ENCODE measurements at regions of chr7 and their contacts with region 1.

Region 1: DNA sequence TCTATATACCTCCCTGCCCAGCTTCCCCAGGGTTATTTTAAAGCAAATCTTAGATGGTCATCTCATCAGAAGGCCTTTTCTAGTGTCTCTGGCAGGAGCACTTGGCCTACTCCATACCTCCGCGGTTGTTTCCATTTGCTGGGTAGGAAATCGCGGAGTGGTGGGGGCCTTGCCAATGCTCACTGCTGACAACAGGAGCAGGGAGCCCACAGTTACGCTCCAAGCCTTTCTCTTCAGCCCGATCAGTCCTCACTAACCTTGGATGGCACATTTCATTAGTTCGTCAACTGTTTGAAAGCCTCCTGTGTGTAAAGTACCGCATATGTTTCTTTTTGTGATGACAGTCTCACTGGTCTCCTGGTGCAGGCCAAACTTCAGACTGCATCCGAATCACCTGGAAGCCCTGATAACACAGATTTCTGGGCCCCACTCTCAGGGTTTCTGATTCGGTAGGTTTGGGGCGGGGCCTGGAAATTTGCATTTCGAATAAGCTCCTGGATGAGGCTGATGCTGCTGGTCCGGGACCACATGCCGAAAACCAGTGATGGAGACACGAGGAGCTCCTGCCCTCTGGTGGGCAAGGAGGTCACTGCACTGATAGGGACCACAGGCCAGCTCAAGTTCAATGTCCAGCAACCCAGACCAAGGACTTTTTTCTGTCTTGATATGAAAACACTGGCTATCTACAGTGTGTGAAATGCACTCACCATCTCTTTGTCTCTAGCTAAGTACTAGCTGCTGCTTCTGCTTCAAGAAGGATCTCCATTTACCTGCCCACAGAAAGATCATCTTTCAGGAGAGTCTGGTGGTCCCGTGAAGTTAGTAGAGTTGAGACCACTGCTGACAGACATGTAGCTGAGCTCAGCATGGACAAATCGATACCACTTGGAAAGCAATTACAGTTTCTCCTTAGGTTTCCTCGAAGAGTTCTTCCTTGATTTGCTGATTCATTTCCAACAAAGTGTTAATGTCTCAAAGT is 14.0 kb downstream of the LRGUK start:
- DNase-seq: peak; percentile 86
- H3K4me3 ChIP-seq: no peak overlapping the region
- H3K27ac ChIP-seq: peak overlapping the region in 1 of 2 experiments; percentile 63; a peak in 2 of 4 replicates
- H3K4me1 ChIP-seq: peaks cover 0 to 20% of the 10 kb centered on the region in 2 experiments; a peak in 2 of 4 replicates
- H3K27me3 ChIP-seq: no peaks in the 10 kb centered on the region
- CTCF ChIP-seq: peak; percentile 98
- EP300 ChIP-seq: peak in 1 of 2 experiments; percentile 49; a peak in 1 of 4 replicates
- RAD21 ChIP-seq: peak; percentile 98

Region 2: GRCh38 chr7:133668296-133669060 is 472.7 kb before region 1 on chr7:
- CTCF ChIA-PET with region 1: no interaction called
- POLR2A ChIA-PET with region 1: no interaction called
- DNase-seq: no peak
- H3K4me3 ChIP-seq: no peak overlapping the region
- H3K27ac ChIP-seq: peak overlapping the region; percentile 39 to 94; a peak in 3 of 4 replicates
- H3K4me1 ChIP-seq: peaks cover 7 to 56% of the 10 kb centered on the region in 2 experiments; a peak in 3 of 4 replicates
- H3K27me3 ChIP-seq: no peaks in the 10 kb centered on the region
- CTCF ChIP-seq: no peak
- EP300 ChIP-seq: no peak
- RAD21 ChIP-seq: no peak

Region 3: GRCh38 chr7:134024739-134025138 is 116.4 kb before region 1 on chr7:
- CTCF ChIA-PET with region 1: interaction called, 19 read pairs
- POLR2A ChIA-PET with region 1: interaction called, 3 read pairs
- DNase-seq: peak; percentile 30
- H3K4me3 ChIP-seq: no peak overlapping the region
- H3K27ac ChIP-seq: peak overlapping the region in 1 of 2 experiments; percentile 98; a peak in 2 of 4 replicates
- H3K4me1 ChIP-seq: peaks cover 0 to 42% of the 10 kb centered on the region in 2 experiments; a peak in 2 of 4 replicates
- H3K27me3 ChIP-seq: no peaks in the 10 kb centered on the region
- CTCF ChIP-seq: no peak
- EP300 ChIP-seq: 0 out of 4 replicates have a peak, but pooled peaks of 1 of the 2 experiments have one; percentile 30
- RAD21 ChIP-seq: no peak; the same call in 1 of the 2 replicates

Region 4: GRCh38 chr7:134126966-134127848 is 14.0 kb before region 1 on chr7 and contains the start of gene LRGUK:
- CTCF ChIA-PET with region 1: interaction called, 25 read pairs
- POLR2A ChIA-PET with region 1: interaction called, 3 read pairs
- DNase-seq: peak; percentile 94
- H3K4me3 ChIP-seq: peak within 1 kb of the TSS; percentile 82 to 86
- H3K27ac ChIP-seq: peak within 1 kb of the TSS in 1 of 2 experiments; percentile 71; a peak in 2 of 4 replicates
- H3K4me1 ChIP-seq: peaks cover 0 to 16% of the 10 kb centered on the region in 2 experiments; a peak in 2 of 4 replicates
- H3K27me3 ChIP-seq: no peaks in the 10 kb centered on the region
- CTCF ChIP-seq: no peak
- EP300 ChIP-seq: no peak
- RAD21 ChIP-seq: no peak
- polyA plus RNA-seq, gene LRGUK: 1.5 TPM in 2 replicates

Region 5: DNA sequence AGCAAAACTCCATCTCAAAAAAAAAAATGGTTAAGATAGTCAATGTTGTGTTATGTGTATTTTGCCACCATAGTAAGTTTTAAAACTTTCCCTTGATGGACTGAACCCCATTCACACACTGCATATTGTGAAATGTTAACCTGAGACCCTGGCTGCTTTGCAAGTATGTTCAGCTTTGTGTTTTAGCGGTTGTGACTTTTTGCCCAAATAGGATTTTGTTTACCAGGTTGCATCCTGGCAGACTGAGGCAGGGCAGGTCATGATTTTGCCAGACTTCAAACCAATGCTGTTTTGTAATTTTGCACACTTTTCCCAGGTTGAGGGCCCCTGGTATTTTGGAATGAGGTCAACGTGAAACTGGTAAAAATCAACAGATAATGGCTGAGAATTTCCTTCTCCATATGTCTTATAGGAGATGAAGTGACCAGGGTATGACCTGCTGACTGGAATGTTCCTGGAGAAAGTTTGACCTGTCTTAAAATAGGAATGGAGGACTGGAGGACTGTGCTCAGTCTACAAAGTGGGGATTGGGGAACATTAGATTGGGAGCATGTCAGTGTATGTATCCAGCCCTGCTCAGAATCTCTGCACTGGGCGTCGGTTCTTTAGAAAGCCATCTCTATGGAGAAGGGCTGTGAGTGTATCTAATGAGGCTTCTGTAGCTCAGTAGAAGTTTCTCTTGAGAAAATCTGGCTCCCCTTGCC is 62.2 kb after region 1 on chr7:
- CTCF ChIA-PET with region 1: no interaction called
- POLR2A ChIA-PET with region 1: no interaction called
- DNase-seq: no peak
- H3K4me3 ChIP-seq: no peak overlapping the region
- H3K27ac ChIP-seq: no peak overlapping the region
- H3K4me1 ChIP-seq: peaks cover 0 to 5% of the 10 kb centered on the region in 2 experiments; a peak in 1 of 4 replicates
- H3K27me3 ChIP-seq: no peaks in the 10 kb centered on the region
- CTCF ChIP-seq: no peak
- EP300 ChIP-seq: no peak
- RAD21 ChIP-seq: no peak

Region 6: GRCh38 chr7:134355927-134356326 is 214.7 kb after region 1 on chr7:
- CTCF ChIA-PET with region 1: interaction called, 12 read pairs
- POLR2A ChIA-PET with region 1: no interaction called
- DNase-seq: no peak
- H3K4me3 ChIP-seq: no peak overlapping the region
- H3K27ac ChIP-seq: no peak overlapping the region
- H3K4me1 ChIP-seq: peaks cover 0 to 13% of the 10 kb centered on the region in 2 experiments; a peak in 1 of 4 replicates
- H3K27me3 ChIP-seq: no peaks in the 10 kb centered on the region
- CTCF ChIP-seq: no peak
- EP300 ChIP-seq: no peak
- RAD21 ChIP-seq: no peak

Region 7: DNA sequence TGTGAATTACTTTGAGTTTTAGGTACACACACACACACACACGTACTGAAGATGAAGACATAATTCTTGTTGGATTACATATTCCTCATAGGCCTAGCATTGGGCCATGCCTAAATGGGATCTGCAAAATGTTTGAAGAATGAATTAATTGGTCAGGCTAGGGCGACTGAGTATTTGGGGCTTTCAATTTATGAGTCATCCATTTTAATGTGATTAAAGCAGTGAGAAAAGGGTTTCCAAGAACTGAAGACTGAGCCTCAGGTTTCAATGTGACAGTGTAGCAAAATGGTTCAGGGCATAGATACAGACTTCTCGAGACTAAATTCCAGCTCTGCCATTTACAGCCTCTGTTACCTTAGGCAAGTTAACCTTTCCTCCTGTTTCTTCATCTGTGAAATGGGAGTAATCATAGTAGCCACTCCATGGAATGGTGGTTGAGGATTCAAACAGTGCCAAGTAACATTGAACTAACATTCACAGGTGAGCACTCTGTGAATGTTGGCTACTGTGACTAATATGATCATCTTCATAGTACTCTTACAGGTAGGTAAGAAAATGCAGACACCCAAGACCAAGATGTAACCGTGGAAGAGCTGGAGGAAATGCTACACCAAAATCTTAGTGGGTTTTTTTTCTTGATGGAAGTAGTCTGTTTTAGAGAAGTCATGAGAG is 513.1 kb after region 1 on chr7:
- CTCF ChIA-PET with region 1: no interaction called
- POLR2A ChIA-PET with region 1: no interaction called
- DNase-seq: no peak
- H3K4me3 ChIP-seq: no peak overlapping the region
- H3K27ac ChIP-seq: no peak overlapping the region; a peak in 1 of 4 replicates
- H3K4me1 ChIP-seq: peaks cover 0 to 14% of the 10 kb centered on the region in 2 experiments; a peak in 2 of 4 replicates
- H3K27me3 ChIP-seq: no peaks in the 10 kb centered on the region
- CTCF ChIP-seq: no peak
- EP300 ChIP-seq: no peak
- RAD21 ChIP-seq: no peak